T-cell (primary cell): ENCODE measurements at regions of chr4 and their contacts with region 1.

Region 1: DNA sequence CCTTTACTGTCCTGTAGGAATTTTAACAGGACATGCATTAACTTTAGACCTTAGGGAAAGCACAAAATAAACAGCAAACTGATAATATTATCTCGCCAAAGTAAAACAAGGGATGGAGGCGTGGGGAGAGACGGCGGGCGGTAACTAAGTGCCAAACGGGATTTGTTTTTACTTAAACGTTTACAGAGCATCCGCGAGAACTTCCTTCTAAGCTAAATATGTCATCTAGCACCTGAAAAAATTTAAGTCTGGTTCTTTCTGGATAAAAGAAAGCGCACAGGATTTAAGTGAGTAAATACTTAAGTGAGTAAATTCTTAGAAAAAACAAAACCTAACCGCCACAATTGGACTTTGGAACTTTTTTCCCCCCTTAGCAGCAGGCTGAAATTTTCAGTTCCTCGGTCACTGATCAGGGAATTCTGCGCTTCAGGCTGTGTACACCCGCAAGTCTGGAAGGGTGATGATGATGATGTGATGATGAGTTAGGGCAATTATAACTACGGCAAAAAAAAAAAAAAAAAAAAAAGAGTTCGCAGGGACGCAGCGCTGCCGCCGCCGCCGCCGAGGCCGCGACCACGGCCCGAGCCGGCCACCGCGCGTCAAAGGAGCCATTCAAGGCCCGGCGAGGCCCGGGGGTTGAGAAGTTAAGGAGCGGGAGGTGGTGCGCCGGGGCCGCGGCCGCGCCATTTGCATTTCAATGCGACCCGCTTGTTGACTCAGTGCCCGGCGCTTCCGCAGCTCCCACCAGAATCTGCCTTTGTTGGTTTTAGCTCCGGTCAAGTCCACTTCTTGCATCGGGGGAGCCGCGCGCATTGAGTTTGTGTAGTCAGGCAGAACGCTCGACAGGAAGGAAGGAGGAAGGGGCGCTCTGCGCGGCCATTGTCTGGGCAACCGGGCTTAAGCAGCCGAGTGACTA is 108.8 kb downstream of the SPRY1 start:
- DNase-seq: peak in 7 of 35 experiments; percentile 0 to 9 (median 2)
- ATAC-seq: peak in 1 of 4 experiments; percentile 29
- H3K4me3 ChIP-seq: peak overlapping the region; percentile 38 to 86
- H3K4me3 Mint-ChIP-seq: peak overlapping the region; percentile 65 to 78 (median 72)
- H3K27ac ChIP-seq: no peak overlapping the region
- H3K27ac Mint-ChIP-seq: no peak overlapping the region
- H3K4me1 ChIP-seq: peaks cover 0 to 5% of the 10 kb centered on the region in 2 experiments
- H3K4me1 Mint-ChIP-seq: peaks cover 13 to 16% (median 15%) of the 10 kb centered on the region in 3 donors
- H3K27me3 ChIP-seq: peaks cover 0 to 16% of the 10 kb centered on the region in 2 experiments
- H3K27me3 Mint-ChIP-seq: peaks cover 20 to 34% of the 10 kb centered on the region in 2 donors

Region 2: GRCh38 chr4:123520325-123520724 is 15.0 kb after region 1 on chr4:
- CTCF ChIA-PET with region 1: interaction called in 1 of 2 experiments, 4 read pairs
- POLR2A ChIA-PET with region 1: interaction called in 1 of 2 experiments, 10 read pairs
- DNase-seq: no peak
- ATAC-seq: no peak
- H3K4me3 ChIP-seq: no peak overlapping the region
- H3K4me3 Mint-ChIP-seq: no peak overlapping the region
- H3K27ac ChIP-seq: no peak overlapping the region
- H3K27ac Mint-ChIP-seq: no peak overlapping the region
- H3K4me1 ChIP-seq: no peaks in the 10 kb centered on the region
- H3K4me1 Mint-ChIP-seq: no peaks in the 10 kb centered on the region
- H3K27me3 ChIP-seq: no peaks in the 10 kb centered on the region
- H3K27me3 Mint-ChIP-seq: no peaks in the 10 kb centered on the region